AG04449 (cell line): ENCODE measurements at regions of chr2 and their contacts with region 1.

Region 1: DNA sequence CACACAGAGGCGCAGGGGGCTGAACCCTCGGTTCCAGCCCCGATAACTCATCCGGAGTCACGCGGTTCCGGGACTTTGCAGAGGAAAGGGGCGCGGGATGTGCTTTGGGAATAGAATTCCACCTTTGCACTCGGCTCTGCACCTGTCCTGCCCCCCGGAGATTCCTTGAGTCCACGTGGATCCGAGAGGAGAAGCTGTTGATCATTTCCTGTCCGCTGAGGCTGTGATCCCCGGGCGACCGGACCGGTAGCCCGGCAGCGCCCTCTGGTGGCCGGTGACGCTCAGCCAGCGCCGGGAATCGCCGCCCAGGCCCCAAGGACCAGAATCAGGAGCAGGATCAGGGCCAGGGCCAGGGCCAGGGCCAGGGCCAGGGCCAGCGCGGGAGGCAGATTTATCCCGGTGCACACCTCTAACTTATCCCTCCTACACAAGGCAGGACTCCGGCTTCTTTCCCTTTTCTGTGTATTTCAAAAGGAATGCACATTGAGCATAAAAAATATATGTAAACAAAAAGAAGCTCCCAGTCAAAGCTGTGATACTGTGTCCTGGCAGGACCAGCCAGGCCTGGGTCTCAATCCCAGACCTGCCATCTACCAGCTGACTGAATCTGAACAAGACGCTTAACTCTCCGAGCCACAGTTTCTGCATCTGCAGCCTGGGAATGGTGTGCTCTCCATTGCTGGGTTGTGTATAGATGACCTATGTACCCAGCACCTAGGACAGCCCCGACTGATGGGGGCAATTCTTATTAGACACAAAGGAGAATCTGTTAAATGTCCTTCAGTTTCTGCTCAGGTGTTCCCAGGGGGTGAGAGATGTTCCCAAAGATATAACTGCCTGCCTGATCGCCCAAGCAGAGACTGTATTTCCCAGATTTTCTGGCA is 8.5 kb upstream of the SPATA3 start:
- DNase-seq: no peak
- H3K4me3 ChIP-seq: peak overlapping the region; percentile 52
- CTCF ChIP-seq: peak; percentile 97

Region 2: GRCh38 chr2:230643576-230644291 is 343.6 kb before region 1 on chr2:
- CTCF ChIA-PET with region 1: no interaction called
- POLR2A ChIA-PET with region 1: no interaction called
- DNase-seq: no peak
- H3K4me3 ChIP-seq: no peak overlapping the region
- CTCF ChIP-seq: no peak

Region 3: DNA sequence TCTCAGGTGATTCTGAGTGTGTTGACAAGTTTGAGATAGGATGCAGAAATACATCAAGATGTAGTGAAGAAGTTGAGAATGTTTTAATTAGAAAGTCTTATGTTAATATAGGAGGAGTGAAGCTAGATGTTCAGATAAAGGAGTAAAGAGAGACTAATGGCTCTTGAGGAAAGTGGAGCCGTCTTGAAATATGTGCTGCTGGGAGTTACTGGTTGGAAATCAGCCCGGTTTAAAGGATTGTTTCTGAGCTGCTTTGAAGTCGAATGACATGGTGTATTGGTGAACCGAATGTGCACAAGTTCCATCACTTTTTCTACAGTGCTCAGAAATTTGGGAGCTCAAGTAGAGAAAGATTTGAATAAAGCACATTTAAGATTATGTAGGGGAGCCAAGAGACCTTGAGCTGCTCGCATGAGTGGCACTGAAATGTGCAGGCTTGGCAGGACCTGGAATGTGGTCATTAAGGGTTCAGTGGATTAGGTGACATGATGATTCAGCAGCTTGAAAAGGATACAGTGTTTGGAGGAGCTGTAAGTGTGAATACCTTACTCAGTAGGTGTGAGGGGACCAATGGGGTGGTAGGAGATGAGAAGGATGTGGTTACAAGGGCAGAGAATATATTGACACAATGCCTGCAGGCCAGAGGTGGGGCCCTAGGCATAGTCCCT is 206.1 kb before region 1 on chr2:
- CTCF ChIA-PET with region 1: no interaction called
- POLR2A ChIA-PET with region 1: no interaction called
- DNase-seq: no peak
- H3K4me3 ChIP-seq: no peak overlapping the region
- CTCF ChIP-seq: no peak

Region 4: GRCh38 chr2:230847883-230848388 is 139.4 kb before region 1 on chr2:
- CTCF ChIA-PET with region 1: interaction called, 24 read pairs
- POLR2A ChIA-PET with region 1: no interaction called
- DNase-seq: peak; percentile 9
- H3K4me3 ChIP-seq: no peak overlapping the region
- CTCF ChIP-seq: peak; percentile 95

Region 5: GRCh38 chr2:230902180-230902899 is 85.0 kb before region 1 on chr2:
- CTCF ChIA-PET with region 1: interaction called, 330 read pairs
- POLR2A ChIA-PET with region 1: no interaction called
- DNase-seq: peak; percentile 10
- H3K4me3 ChIP-seq: no peak overlapping the region
- CTCF ChIP-seq: peak; percentile 96

Region 6: GRCh38 chr2:230974096-230974913 is 13.1 kb before region 1 on chr2:
- CTCF ChIA-PET with region 1: interaction called, 34 read pairs
- POLR2A ChIA-PET with region 1: no interaction called
- DNase-seq: peak; percentile 12
- H3K4me3 ChIP-seq: no peak overlapping the region
- CTCF ChIP-seq: no peak

Region 7: DNA sequence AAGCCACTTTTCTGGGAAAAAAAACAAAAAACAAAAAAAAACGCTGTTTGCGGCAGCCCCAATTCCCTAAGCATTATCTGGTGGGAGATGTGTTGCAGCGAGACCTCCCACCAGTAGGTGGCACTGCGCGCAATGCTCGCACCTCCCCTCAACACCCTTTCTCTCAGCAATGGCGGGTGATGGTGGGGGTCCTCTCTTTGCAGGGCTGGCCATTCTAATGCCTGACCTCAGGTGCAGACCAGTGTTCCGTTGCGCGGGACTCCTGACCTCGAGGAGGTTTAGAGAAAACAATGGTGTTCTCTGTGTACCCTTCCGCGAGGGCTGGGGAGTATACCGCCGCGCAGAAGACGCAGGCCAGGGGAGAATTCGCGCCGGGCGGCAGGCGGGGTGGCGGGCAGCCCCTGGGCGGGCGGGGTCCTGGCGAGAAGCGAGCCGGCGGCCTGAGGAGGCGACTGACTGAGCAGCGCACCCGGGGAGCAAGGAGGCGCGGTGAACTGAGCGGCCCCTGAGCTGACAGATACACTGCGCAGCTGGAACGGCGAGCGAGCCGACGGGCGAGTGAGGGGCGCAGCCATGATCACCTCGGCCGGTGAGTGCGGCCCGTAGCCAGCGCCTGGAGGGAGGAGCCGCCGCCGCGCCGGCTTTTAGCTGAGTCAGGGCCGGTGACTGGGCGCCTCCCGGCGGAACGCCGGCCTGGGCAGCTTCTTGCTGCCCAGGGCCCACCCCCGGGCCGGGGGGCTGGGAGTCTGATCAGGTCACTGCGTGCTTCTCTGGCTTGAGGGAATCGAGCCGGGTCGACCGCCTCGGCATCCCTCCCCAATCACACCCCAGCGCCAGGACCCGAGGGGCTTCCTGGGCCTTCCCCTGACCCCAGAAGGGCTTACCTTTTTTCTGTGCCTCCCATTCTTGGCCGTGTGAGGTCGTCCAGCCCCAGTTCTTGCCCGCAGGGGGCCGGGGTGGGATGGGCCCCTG is 69.4 kb after region 1 on chr2 and contains the start of gene PSMD1:
- CTCF ChIA-PET with region 1: interaction called, 11 read pairs
- POLR2A ChIA-PET with region 1: no interaction called
- DNase-seq: peak; percentile 55
- H3K4me3 ChIP-seq: peak within 1 kb of the TSS; percentile 89
- CTCF ChIP-seq: peak; percentile 98

Region 8: DNA sequence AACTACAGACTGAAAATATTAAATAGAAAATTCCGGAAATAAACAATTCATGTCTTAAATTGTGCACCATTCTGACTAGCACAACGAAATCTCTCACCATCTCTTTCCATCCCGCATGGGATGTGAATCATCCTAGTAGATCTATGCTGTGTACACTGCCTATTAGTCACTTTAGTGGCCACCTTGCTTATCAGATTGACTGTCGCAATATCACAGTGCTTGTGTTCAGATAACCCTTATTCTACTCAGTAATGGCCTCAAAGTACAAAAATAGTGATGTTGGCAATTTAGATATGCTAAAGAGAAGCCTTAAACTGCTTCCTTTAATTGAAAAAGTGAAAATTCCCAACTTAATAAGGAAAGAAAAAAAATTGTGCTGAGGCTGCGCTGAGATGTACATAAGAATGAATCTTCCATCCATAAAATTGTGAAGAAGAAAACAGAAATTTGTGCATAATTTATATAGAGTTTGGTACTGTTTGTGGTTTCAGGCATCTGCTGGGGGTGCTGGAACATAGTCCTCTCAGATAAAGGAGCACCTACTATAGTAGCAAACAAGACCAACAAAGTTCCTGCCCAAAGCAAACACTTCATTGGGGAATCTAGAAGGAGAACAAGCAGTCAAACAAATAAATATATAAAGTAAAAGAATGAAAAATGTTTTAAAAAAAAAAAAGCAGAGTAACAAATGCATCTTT is 81.3 kb after region 1 on chr2:
- CTCF ChIA-PET with region 1: no interaction called
- POLR2A ChIA-PET with region 1: no interaction called
- DNase-seq: no peak
- H3K4me3 ChIP-seq: no peak overlapping the region
- CTCF ChIP-seq: no peak

Region 9: DNA sequence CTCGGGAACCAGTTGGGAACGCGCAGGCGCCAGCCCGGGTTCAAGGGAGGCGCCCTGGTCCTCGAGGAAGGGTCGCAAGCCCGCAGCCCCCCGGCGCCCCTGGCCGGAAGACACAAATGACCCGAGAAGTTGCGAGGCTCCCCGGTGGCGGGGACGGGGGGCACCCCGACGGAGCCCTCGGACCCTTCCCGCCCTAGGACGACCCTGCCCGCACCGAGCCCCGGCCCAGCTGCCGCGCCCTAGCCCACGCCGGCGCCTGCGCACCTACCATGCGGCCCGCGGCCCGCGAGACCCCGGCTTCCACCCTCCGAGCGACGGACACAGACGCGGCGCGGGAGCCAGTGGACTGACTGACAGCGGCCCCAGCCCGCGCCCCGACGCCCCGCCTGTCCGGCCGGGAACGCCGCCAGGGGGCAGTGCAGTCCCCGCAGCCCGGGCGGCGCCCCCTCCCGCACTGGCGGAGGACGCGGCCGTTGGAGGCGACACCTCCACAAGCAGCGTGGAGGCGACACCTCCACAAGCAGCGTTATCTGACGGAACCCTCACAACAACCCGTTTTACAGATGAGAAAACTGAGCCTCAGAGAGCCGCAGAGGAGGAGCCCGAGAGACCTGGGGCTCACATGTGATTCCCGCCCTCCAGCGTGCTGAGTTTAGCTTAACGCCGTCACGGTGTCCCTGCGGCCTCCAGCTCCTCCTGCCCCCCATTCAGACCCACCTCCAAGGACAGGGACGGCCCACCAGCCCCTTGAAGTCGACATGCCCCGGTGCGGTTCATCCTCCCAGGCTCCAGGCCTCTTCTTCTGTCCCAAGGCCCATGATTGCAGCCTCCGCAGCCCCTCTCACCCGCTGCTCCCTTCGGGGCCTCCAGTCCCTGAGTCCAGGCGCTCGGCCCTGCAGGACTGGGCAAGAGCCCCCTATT is 543.0 kb after region 1 on chr2 and contains the start of gene NMUR1:
- CTCF ChIA-PET with region 1: no interaction called
- POLR2A ChIA-PET with region 1: no interaction called
- DNase-seq: no peak
- H3K4me3 ChIP-seq: peak within 1 kb of the TSS; percentile 6; the same call in 1 of the 2 replicates
- CTCF ChIP-seq: peak; percentile 61